Gastrocnemius medialis (tissue), 4 donors: ENCODE measurements at regions of chr1 and their contacts with region 1.

Region 1: GRCh38 chr1:90359994-90360393 is 357.1 kb downstream of the BARHL2 start:
- DNase-seq: no peak
- ATAC-seq: no peak
- H3K4me3 ChIP-seq: no peak overlapping the region
- H3K27ac ChIP-seq: no peak overlapping the region
- H3K4me1 ChIP-seq: no peaks in the 10 kb centered on the region
- H3K27me3 ChIP-seq: no peaks in the 10 kb centered on the region
- CTCF ChIP-seq: no peak
- POLR2A ChIP-seq: no peak

Region 2: GRCh38 chr1:90391126-90391525 is 31.1 kb after region 1 on chr1:
- in situ Hi-C with region 1: no loop called
- intact Hi-C with region 1: no loop called
- DNase-seq: no peak
- ATAC-seq: no peak
- H3K4me3 ChIP-seq: no peak overlapping the region
- H3K27ac ChIP-seq: no peak overlapping the region
- H3K4me1 ChIP-seq: peaks cover 0 to 10% of the 10 kb centered on the region in 2 donors
- H3K27me3 ChIP-seq: no peaks in the 10 kb centered on the region
- CTCF ChIP-seq: no peak
- POLR2A ChIP-seq: no peak

Region 3: DNA sequence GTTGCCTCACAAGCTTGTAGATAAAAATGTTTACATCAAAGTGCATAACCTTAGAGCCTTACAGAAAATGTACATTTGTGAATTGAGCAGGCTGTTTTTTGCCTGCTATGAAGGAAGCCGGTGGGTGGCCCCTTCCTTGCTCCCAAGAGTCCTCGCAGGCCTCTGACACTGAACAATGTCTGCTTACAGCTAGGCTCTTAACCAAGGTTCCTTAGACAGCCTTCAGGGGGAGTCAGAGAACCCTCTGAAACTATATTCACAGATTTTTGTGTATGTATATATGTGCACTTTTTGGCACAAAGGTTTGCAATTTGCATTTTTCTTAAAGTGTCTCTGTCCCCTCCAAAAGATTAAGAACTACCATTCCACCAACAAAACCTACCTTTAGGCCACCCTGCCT is 74.5 kb after region 1 on chr1:
- in situ Hi-C with region 1: loop called in 1 of 4 experiments (anchors 10 kb)
- intact Hi-C with region 1: no loop called
- DNase-seq: no peak
- ATAC-seq: no peak
- H3K4me3 ChIP-seq: no peak overlapping the region
- H3K27ac ChIP-seq: no peak overlapping the region
- H3K4me1 ChIP-seq: no peaks in the 10 kb centered on the region
- H3K27me3 ChIP-seq: no peaks in the 10 kb centered on the region
- CTCF ChIP-seq: no peak
- POLR2A ChIP-seq: no peak

Region 4: GRCh38 chr1:90457985-90458384 is 98.0 kb after region 1 on chr1:
- in situ Hi-C with region 1: no loop called
- intact Hi-C with region 1: no loop called
- DNase-seq: no peak
- ATAC-seq: no peak
- H3K4me3 ChIP-seq: no peak overlapping the region
- H3K27ac ChIP-seq: no peak overlapping the region
- H3K4me1 ChIP-seq: no peaks in the 10 kb centered on the region
- H3K27me3 ChIP-seq: no peaks in the 10 kb centered on the region
- CTCF ChIP-seq: no peak
- POLR2A ChIP-seq: no peak